T-cell (primary cell): ENCODE measurements at regions of chr7 and their contacts with region 1.

Region 1: DNA sequence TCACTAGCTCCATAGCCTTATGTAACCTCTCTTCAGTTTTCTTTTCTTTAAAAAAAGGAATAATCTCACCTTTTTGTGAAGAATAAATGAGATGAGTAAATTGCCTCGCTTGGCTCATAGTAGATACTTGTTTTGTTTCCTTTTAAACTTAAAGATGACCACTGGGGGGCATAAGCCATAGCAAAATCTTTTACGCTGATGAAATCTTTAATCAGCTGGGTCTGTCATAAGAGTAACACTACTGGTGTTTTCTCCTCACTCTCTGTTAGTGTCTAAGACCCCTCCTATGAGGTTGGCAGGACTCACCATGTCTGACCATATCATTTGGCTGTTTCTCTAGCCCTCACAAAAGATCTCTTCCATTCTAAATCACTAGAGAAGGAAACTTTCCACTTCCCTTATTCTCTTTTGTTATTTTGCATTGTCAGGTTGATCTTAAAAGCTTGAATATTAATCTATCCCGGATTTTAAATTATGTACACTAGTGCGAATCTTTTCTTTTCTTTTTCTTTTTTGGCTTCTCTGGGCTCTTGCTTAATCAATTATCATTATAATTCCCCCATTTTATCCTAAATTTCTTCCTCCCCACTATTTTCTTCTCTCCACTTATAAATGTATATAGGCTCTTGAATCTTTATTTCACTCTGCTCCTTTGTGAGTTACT is 12.5 kb downstream of the STAG3 start:
- DNase-seq: peak in 1 of 35 experiments; percentile 73
- ATAC-seq: peak; percentile 77 to 87 (median 84)
- H3K4me3 ChIP-seq: no peak overlapping the region
- H3K4me3 Mint-ChIP-seq: no peak overlapping the region
- H3K27ac ChIP-seq: no peak overlapping the region
- H3K27ac Mint-ChIP-seq: peak overlapping the region; percentile 37 to 50
- H3K4me1 ChIP-seq: peaks cover 0 to 37% of the 10 kb centered on the region in 2 experiments
- H3K4me1 Mint-ChIP-seq: peaks cover 35 to 43% (median 42%) of the 10 kb centered on the region in 3 donors
- H3K27me3 ChIP-seq: no peaks in the 10 kb centered on the region
- H3K27me3 Mint-ChIP-seq: no peaks in the 10 kb centered on the region

Region 2: DNA sequence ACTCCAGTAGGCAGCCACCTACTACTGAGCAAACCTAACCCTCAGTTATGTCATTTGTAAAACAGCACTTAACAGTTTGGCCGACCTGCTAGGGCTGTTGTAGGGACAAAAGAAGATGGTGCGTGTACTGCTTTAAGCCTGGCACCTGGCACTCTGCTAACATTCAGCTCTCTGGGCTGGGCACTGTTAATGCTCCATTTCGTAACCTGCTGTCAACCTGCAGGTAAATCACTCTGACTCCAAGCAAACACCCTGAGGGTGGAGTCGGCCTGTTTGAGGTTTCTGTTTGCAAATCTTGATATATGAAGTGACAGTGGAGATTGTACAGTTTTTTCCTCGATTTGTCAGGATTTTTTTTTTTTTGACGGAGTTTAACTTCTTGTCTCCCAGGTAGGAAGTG is 167.5 kb before region 1 on chr7:
- CTCF ChIA-PET with region 1: no interaction called
- POLR2A ChIA-PET with region 1: interaction called in 1 of 2 experiments, 11 read pairs
- DNase-seq: no peak
- ATAC-seq: no peak
- H3K4me3 ChIP-seq: no peak overlapping the region
- H3K4me3 Mint-ChIP-seq: no peak overlapping the region
- H3K27ac ChIP-seq: no peak overlapping the region
- H3K27ac Mint-ChIP-seq: no peak overlapping the region
- H3K4me1 ChIP-seq: peaks cover 0 to 6% of the 10 kb centered on the region in 2 experiments
- H3K4me1 Mint-ChIP-seq: peaks cover 32 to 36% (median 35%) of the 10 kb centered on the region in 3 donors
- H3K27me3 ChIP-seq: no peaks in the 10 kb centered on the region
- H3K27me3 Mint-ChIP-seq: no peaks in the 10 kb centered on the region

Region 3: DNA sequence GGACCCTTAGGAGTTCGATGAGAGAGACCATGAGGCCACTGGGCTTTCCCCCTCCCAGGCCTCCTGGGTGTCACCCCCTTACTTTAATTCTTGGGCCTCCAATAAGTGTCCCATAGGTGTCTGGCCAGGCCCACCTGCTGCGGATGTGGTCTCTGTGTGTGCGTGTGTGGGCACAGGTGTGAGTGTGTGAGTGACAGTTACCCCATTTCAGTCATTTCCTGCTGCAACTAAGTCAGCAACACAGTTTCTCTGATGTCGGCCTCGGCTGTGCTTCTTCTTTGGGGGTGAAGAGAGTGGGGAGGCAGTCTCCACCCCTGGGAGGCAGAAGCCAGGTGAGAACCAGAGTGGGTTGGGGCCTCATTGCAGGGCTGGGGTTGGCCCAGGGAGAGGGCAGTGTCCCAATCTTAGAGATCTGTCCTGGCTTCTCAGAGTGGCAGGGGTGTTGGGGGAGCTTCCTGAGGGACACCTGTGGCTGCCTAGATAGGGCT is 31.1 kb after region 1 on chr7:
- CTCF ChIA-PET with region 1: interaction called, 3 to 13 read pairs
- POLR2A ChIA-PET with region 1: no interaction called
- DNase-seq: peak; percentile 53 to 90 (median 83)
- ATAC-seq: peak; percentile 66 to 76 (median 68)
- H3K4me3 ChIP-seq: peak overlapping the region; percentile 75 to 92
- H3K4me3 Mint-ChIP-seq: peak overlapping the region; percentile 87 to 93 (median 92)
- H3K27ac ChIP-seq: peak overlapping the region; percentile 98
- H3K27ac Mint-ChIP-seq: peak overlapping the region; percentile 98 to 99
- H3K4me1 ChIP-seq: peaks cover 13 to 82% of the 10 kb centered on the region in 2 experiments
- H3K4me1 Mint-ChIP-seq: peaks cover 68 to 79% (median 74%) of the 10 kb centered on the region in 3 donors
- H3K27me3 ChIP-seq: no peaks in the 10 kb centered on the region
- H3K27me3 Mint-ChIP-seq: no peaks in the 10 kb centered on the region